H1 (cell line): ENCODE measurements at regions of chr14 and their contacts with region 1.

Region 1: DNA sequence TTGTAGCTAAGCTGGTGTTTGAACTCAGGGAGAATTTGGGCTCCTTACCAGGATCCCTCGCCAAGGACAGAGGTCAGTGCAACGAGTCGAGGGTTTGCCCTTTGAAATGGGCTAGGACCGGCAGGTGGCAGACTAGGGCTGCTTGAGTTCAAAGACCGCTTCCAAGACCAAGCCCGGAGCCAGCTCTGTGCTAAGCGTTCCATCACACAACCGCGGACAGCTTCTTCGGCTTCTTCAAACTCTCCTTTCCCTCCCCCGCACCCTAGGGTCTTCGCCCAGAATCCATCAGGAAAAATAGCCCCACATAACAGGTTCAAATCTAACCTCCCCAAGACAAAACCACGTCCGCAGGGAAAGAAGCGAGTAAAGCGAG is 705 bp upstream of the FLVCR2 start:
- DNase-seq: peak; percentile 79 to 85
- H3K4me3 ChIP-seq: peak overlapping the region; percentile 46 to 83 (median 72)
- H3K27ac ChIP-seq: no peak overlapping the region
- H3K4me1 ChIP-seq: peaks cover 0 to 13% (median 4%) of the 10 kb centered on the region in 4 experiments; a peak in 4 of 7 replicates
- H3K27me3 ChIP-seq: peaks cover 0 to 8% (median 5%) of the 10 kb centered on the region in 4 experiments; a peak in 6 of 7 replicates
- CTCF ChIP-seq: peak; percentile 75 to 91 (median 90)
- EP300 ChIP-seq: no peak
- POLR2A ChIP-seq: no peak
- RAD21 ChIP-seq: peak; percentile 88 to 92

Region 2: GRCh38 chr14:75514673-75515628 is 62.8 kb before region 1 on chr14:
- CTCF ChIA-PET with region 1: interaction called, 20 read pairs
- POLR2A ChIA-PET with region 1: no interaction called
- DNase-seq: peak in 1 of 2 experiments; percentile 53
- H3K4me3 ChIP-seq: no peak overlapping the region
- H3K27ac ChIP-seq: no peak overlapping the region
- H3K4me1 ChIP-seq: peaks cover 0 to 4% (median 1%) of the 10 kb centered on the region in 4 experiments; a peak in 1 of 7 replicates
- H3K27me3 ChIP-seq: no peaks in the 10 kb centered on the region
- CTCF ChIP-seq: peak; percentile 15 to 47 (median 37)
- EP300 ChIP-seq: no peak
- POLR2A ChIP-seq: no peak
- RAD21 ChIP-seq: peak; percentile 22 to 45

Region 3: GRCh38 chr14:75597149-75597548 is 19.4 kb after region 1 on chr14:
- CTCF ChIA-PET with region 1: interaction called, 12 read pairs
- POLR2A ChIA-PET with region 1: no interaction called
- DNase-seq: no peak
- H3K4me3 ChIP-seq: no peak overlapping the region
- H3K27ac ChIP-seq: no peak overlapping the region
- H3K4me1 ChIP-seq: no peaks in the 10 kb centered on the region; a peak in 2 of 7 replicates
- H3K27me3 ChIP-seq: no peaks in the 10 kb centered on the region
- CTCF ChIP-seq: no peak
- EP300 ChIP-seq: no peak
- POLR2A ChIP-seq: no peak
- RAD21 ChIP-seq: no peak

Region 4: GRCh38 chr14:75636100-75636692 is 58.5 kb after region 1 on chr14:
- CTCF ChIA-PET with region 1: interaction called, 19 read pairs
- POLR2A ChIA-PET with region 1: interaction called, 4 read pairs
- DNase-seq: no peak
- H3K4me3 ChIP-seq: no peak overlapping the region
- H3K27ac ChIP-seq: no peak overlapping the region
- H3K4me1 ChIP-seq: peaks cover 4 to 19% (median 14%) of the 10 kb centered on the region in 4 experiments
- H3K27me3 ChIP-seq: no peaks in the 10 kb centered on the region
- CTCF ChIP-seq: no peak
- EP300 ChIP-seq: no peak
- POLR2A ChIP-seq: no peak
- RAD21 ChIP-seq: no peak

Region 5: DNA sequence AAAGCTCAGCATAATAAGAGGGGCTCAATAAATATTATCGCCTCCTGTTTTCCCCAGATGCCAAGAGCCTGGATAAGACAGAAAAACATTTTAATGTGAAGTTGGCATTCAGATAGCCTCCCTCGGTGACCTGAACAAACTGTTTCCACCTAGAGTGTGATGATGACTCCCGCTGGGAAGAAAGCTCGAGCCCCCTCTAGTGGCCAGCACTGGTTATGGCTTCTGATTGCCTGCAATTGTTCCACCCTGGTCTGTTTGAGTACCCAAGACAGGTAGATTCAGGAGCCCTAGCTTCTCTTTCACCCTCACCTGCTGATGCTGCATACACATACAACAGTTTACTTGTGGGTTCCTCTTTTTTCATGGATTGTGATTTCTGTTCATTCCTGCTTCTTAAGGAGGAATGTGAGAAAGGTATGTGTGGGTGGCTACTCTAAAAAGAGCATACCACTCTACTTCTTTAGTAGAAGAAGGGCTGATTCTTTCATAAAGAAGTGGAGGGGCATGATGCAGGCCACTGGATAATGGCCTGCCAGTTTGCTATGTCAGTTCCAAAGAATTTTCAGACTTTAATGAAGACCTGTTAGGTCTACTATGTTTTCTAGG is 76.5 kb after region 1 on chr14:
- CTCF ChIA-PET with region 1: interaction called, 348 read pairs
- POLR2A ChIA-PET with region 1: interaction called, 19 read pairs
- DNase-seq: peak; percentile 64 to 95
- H3K4me3 ChIP-seq: no peak overlapping the region
- H3K27ac ChIP-seq: no peak overlapping the region
- H3K4me1 ChIP-seq: no peaks in the 10 kb centered on the region
- H3K27me3 ChIP-seq: no peaks in the 10 kb centered on the region
- CTCF ChIP-seq: peak; percentile 91 to 99 (median 94)
- EP300 ChIP-seq: no peak
- POLR2A ChIP-seq: no peak
- RAD21 ChIP-seq: peak; percentile 86 to 91

Region 6: DNA sequence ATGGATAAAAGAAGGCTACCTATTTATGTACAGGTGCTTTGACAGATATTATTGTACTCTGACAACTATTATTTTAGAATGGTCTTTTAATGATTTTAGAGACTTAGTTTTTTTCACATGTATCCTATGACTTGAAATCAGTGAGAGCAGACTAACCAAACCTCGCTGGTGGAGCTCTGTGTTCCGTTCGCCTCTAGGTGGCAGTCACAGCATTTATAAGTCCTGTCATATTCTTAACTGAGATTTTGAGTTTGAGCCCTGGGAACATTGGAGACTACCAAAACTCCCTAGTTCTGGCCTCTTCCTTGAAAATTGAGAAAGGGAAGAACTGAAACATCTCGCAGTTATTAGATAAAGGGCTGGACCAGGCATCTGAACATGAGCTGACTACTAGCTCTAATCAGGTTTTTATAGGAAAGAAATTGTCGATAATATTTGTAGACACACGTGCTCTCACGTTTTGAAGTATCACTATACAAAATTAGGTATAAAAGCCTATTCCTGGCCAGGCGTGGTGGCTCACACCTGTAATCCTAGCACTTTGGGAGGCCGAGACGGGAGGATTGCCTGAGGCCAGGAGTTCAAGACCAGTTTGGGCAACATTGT is 131.6 kb after region 1 on chr14:
- CTCF ChIA-PET with region 1: interaction called, 10 read pairs
- POLR2A ChIA-PET with region 1: no interaction called
- DNase-seq: peak; percentile 44 to 56
- H3K4me3 ChIP-seq: no peak overlapping the region
- H3K27ac ChIP-seq: no peak overlapping the region
- H3K4me1 ChIP-seq: peaks cover 0 to 14% (median 5%) of the 10 kb centered on the region in 4 experiments; a peak in 6 of 7 replicates
- H3K27me3 ChIP-seq: no peaks in the 10 kb centered on the region
- CTCF ChIP-seq: peak; percentile 49 to 77 (median 69)
- EP300 ChIP-seq: no peak
- POLR2A ChIP-seq: no peak
- RAD21 ChIP-seq: peak; percentile 77 to 80